ENCODE measurements at regions of chr20 and their contacts with region 1.

Region 1: GRCh38 chr20:8545212-8545611 is 413.1 kb downstream of the PLCB1 start:
- DNase-seq: no peak
- ATAC-seq: no peak
- H3K4me3 ChIP-seq: no peak overlapping the region
- H3K4me3 Mint-ChIP-seq: no peak overlapping the region
- H3K27ac ChIP-seq: no peak overlapping the region
- H3K27ac Mint-ChIP-seq: no peak overlapping the region
- H3K4me1 ChIP-seq: no peaks in the 10 kb centered on the region
- H3K4me1 Mint-ChIP-seq: no peaks in the 10 kb centered on the region
- H3K27me3 ChIP-seq: no peaks in the 10 kb centered on the region
- H3K27me3 Mint-ChIP-seq: no peaks in the 10 kb centered on the region

Region 2: DNA sequence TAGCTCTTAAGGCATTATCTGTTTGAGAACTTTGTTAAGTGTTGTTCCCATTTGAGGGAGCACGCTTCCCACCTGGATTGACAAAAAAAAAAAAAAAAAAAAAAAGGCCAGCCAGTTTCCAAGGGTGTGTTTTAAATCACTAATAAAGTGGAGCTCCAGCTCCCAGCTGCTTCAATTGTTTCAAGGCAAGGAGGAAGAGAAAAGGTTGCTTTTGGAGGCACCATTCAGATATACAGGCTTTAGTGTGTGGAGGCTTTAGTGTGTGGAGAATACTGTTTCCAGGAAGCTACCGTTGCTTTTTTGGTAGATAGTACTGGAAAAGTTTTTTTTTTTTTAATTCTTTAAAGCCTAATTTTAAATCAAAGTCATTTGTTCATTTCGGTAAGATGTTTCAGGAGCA is 1760.4 kb before region 1 on chr20:
- CTCF ChIA-PET with region 1: interaction called in 1 of 2 experiments, 12 read pairs
- POLR2A ChIA-PET with region 1: no interaction called
- DNase-seq: no peak
- ATAC-seq: no peak
- H3K4me3 ChIP-seq: no peak overlapping the region
- H3K4me3 Mint-ChIP-seq: no peak overlapping the region
- H3K27ac ChIP-seq: no peak overlapping the region
- H3K27ac Mint-ChIP-seq: no peak overlapping the region
- H3K4me1 ChIP-seq: no peaks in the 10 kb centered on the region
- H3K4me1 Mint-ChIP-seq: no peaks in the 10 kb centered on the region
- H3K27me3 ChIP-seq: peaks cover 0 to 3% of the 10 kb centered on the region in 2 experiments
- H3K27me3 Mint-ChIP-seq: no peaks in the 10 kb centered on the region

Measured in T-cell (primary cell).